ENCODE measurements at regions of chr16 and their contacts with region 1.

Region 1: GRCh38 chr16:75443298-75443697 is 10.0 kb upstream of the CFDP1 start:
- DNase-seq: no peak
- ATAC-seq: no peak
- H3K4me3 ChIP-seq: no peak overlapping the region
- H3K4me3 Mint-ChIP-seq: no peak overlapping the region
- H3K27ac ChIP-seq: no peak overlapping the region
- H3K27ac Mint-ChIP-seq: no peak overlapping the region
- H3K4me1 ChIP-seq: no peaks in the 10 kb centered on the region
- H3K4me1 Mint-ChIP-seq: no peaks in the 10 kb centered on the region
- H3K27me3 ChIP-seq: no peaks in the 10 kb centered on the region
- H3K27me3 Mint-ChIP-seq: no peaks in the 10 kb centered on the region

Region 2: DNA sequence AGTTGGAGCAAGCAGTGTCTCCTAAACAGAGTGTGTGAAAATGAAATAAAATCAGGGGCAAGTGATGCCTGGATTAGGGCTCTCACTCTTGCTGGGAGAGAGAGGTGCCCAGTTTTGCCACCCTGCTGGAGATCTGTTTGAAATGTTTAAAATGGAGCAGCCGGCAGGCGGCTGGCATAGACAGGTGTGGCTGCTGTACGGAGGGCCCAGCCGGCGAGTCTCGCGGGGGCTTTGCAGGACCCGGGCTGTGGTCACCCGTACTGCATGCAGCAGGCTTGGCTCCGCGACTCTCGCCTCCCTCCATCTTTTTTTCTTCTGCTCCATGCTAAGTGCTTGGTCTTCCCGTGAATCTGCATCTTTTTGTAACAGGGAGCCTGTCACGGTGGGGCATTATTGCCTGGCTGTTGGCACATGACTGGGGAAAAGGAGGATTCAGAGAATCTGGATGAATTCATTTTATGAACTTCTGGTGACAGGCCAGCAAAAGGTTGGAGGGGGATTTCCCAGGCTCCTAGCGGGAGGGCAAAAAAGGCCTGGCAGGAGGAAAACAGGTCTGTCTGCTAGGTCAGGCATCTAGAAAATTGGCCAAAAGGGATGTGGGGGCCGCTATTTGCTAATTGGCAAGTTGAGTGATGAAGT is 442.7 kb before region 1 on chr16:
- CTCF ChIA-PET with region 1: no interaction called
- POLR2A ChIA-PET with region 1: no interaction called
- DNase-seq: peak in 2 of 35 experiments; percentile 3 to 10
- ATAC-seq: no peak
- H3K4me3 ChIP-seq: peak overlapping the region in 1 of 2 donors; percentile 60
- H3K4me3 Mint-ChIP-seq: peak overlapping the region; percentile 64 to 82 (median 76)
- H3K27ac ChIP-seq: no peak overlapping the region
- H3K27ac Mint-ChIP-seq: no peak overlapping the region
- H3K4me1 ChIP-seq: peaks cover 6 to 23% of the 10 kb centered on the region in 2 experiments
- H3K4me1 Mint-ChIP-seq: peaks cover 12 to 20% (median 17%) of the 10 kb centered on the region in 3 donors
- H3K27me3 ChIP-seq: peaks cover 0 to 10% of the 10 kb centered on the region in 2 experiments
- H3K27me3 Mint-ChIP-seq: peaks cover 3 to 5% of the 10 kb centered on the region in 2 donors

Region 3: GRCh38 chr16:75415169-75415905 is 28.0 kb before region 1 on chr16:
- CTCF ChIA-PET with region 1: interaction called in 1 of 2 experiments, 10 read pairs
- POLR2A ChIA-PET with region 1: no interaction called
- DNase-seq: no peak
- ATAC-seq: no peak
- H3K4me3 ChIP-seq: no peak overlapping the region
- H3K4me3 Mint-ChIP-seq: no peak overlapping the region
- H3K27ac ChIP-seq: no peak overlapping the region
- H3K27ac Mint-ChIP-seq: no peak overlapping the region
- H3K4me1 ChIP-seq: no peaks in the 10 kb centered on the region
- H3K4me1 Mint-ChIP-seq: peaks cover 23 to 31% (median 28%) of the 10 kb centered on the region in 3 donors
- H3K27me3 ChIP-seq: no peaks in the 10 kb centered on the region
- H3K27me3 Mint-ChIP-seq: no peaks in the 10 kb centered on the region

Measured in T-cell (primary cell).